Heart right ventricle (tissue), 16 donors: ENCODE measurements at regions of chr12 and their contacts with region 1.

Region 1: GRCh38 chr12:12983420-12984035 is 16.5 kb downstream of the HEBP1 start:
- DNase-seq: peak in 1 of 2 donors; percentile 23
- ATAC-seq: peak in 6 of 8 donors; percentile 57 to 73 (median 64)
- H3K4me3 ChIP-seq: no peak overlapping the region
- H3K27ac ChIP-seq: no peak overlapping the region
- H3K4me1 ChIP-seq: peaks cover 0 to 13% (median 3%) of the 10 kb centered on the region in 9 donors
- H3K27me3 ChIP-seq: no peaks in the 10 kb centered on the region
- CTCF ChIP-seq: peak; percentile 23 to 73 (median 61)

Region 2: DNA sequence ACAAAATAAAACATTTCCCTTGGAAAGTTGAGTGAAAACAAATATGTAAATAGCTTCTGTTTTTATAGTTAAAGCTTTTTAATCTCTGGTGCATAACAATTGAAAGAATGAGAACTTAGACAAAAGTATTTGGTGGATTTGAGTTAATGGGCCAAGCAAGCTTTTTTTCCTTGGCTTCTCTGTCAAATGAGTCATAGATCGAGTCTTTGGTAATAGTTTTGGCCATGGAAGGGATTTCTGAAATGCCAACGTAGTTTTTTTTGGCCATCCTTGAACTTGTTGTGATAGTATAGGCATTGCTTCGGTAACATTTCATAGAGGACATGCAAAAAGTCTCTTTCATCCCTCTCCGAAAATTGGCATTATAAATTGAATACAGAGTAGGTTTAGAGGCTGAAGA is 322.4 kb before region 1 on chr12:
- intact Hi-C with region 1: no loop called
- DNase-seq: no peak
- ATAC-seq: no peak
- H3K4me3 ChIP-seq: no peak overlapping the region
- H3K27ac ChIP-seq: no peak overlapping the region
- H3K4me1 ChIP-seq: peaks cover 0 to 2% (median 0%) of the 10 kb centered on the region in 9 donors
- H3K27me3 ChIP-seq: no peaks in the 10 kb centered on the region
- CTCF ChIP-seq: no peak

Region 3: GRCh38 chr12:12819671-12820311 is 163.7 kb before region 1 on chr12:
- intact Hi-C with region 1: loop called in 2 of 10 experiments (anchors 10 kb)
- DNase-seq: no peak
- ATAC-seq: peak in 4 of 8 donors; percentile 35 to 62 (median 53)
- H3K4me3 ChIP-seq: no peak overlapping the region
- H3K27ac ChIP-seq: peak overlapping the region in 3 of 10 donors; percentile 25 to 37 (median 32)
- H3K4me1 ChIP-seq: peaks cover 0 to 58% (median 34%) of the 10 kb centered on the region in 9 donors
- H3K27me3 ChIP-seq: no peaks in the 10 kb centered on the region
- CTCF ChIP-seq: no peak

Region 4: GRCh38 chr12:12837025-12837872 is 146.3 kb before region 1 on chr12:
- intact Hi-C with region 1: loop called in 6 of 10 experiments (anchors 2 to 10 kb)
- DNase-seq: peak in 1 of 2 donors; percentile 12
- ATAC-seq: peak; percentile 35 to 83 (median 56)
- H3K4me3 ChIP-seq: no peak overlapping the region
- H3K27ac ChIP-seq: no peak overlapping the region
- H3K4me1 ChIP-seq: peaks cover 0 to 7% (median 0%) of the 10 kb centered on the region in 9 donors
- H3K27me3 ChIP-seq: no peaks in the 10 kb centered on the region
- CTCF ChIP-seq: peak in 8 of 9 donors; percentile 29 to 63 (median 52)

Region 5: DNA sequence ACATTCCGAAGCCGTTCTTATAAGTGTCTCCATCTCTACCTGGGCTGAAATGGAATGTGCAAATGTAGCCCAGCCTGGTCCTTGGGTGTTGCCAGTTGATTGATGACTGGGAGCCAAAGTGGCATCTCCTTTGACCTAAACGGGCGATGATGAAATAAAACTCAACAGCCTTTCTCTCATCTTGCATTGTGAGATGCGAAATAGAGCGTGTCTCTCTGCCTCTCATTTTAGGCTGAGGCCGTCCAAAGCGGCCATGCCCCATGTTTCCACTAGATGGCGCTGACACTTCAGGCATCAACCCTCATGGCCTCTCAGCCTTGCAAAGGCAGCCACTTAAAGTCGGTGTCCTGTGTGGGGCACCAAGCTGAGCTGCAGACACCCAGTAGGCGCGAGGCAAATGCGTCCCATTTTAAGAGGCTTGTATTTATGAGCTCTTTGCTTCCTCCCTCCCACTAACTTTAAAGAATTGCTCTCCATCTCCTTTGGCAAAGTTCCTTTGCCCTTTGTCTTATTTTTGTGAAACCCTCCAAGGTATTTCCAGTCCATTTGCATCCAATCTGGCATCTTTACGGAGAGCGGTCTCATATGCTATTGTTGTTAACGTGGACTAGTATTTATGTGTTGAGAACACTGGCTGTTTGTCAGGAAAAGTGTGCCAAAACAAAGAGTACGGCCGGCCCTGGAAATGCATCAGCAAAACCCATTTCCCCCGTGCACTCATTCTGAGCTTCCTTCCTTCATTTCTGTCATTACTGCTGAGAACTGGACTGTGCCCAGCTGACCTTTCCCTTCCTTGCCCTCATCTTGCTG is 67.2 kb before region 1 on chr12:
- intact Hi-C with region 1: loop called (anchors 1 to 10 kb)
- DNase-seq: peak; percentile 85 to 87
- ATAC-seq: peak; percentile 87 to 97 (median 95)
- H3K4me3 ChIP-seq: peak overlapping the region in 5 of 10 donors; percentile 16 to 32 (median 19)
- H3K27ac ChIP-seq: peak overlapping the region in 8 of 10 donors; percentile 12 to 51 (median 35)
- H3K4me1 ChIP-seq: peaks cover 0 to 19% (median 8%) of the 10 kb centered on the region in 9 donors
- H3K27me3 ChIP-seq: peaks cover 0 to 3% (median 0%) of the 10 kb centered on the region in 7 donors
- CTCF ChIP-seq: peak; percentile 94 to 99 (median 98)

Region 6: DNA sequence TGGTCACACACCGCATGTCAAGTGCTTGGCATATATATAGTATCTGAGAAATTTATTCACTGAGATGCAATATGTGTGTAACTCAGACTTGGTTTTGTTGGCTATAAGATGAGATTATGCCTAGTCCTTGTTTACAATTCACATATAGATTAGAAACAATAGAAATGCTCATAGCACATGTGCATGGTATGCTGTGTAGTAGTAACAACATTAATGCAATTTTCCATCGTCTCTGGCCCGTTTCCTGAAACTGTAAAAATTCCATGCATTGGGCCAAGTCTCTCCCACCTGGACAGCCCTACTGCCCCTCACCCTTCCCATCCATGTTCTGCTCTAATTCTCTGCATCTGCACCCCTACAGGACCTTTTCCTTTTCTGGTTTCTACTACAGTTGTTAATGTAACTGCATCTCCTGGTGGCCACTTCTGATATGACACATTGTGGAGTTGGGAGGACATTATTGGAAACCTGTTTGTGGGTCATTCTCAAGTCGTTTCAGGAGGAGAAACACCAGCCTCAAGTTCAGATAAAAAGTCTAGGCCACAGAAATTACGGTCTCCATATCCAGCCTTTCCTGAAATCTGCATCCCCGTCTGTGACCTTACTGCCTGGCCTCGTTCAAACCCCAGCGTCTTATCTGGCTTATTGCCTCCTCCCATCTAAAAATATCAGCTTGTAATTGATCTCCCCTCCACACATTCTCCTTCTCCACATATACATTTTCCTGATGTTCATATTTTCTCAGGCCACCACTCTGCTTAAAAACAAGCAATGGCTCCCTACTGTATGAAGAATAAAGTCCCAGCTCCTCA is 250.5 kb after region 1 on chr12:
- intact Hi-C with region 1: loop called in 1 of 10 experiments (anchors 10 kb)
- DNase-seq: peak in 1 of 2 donors; percentile 67
- ATAC-seq: peak in 6 of 8 donors; percentile 47 to 75 (median 64)
- H3K4me3 ChIP-seq: no peak overlapping the region
- H3K27ac ChIP-seq: no peak overlapping the region
- H3K4me1 ChIP-seq: peaks cover 0 to 8% (median 0%) of the 10 kb centered on the region in 9 donors
- H3K27me3 ChIP-seq: no peaks in the 10 kb centered on the region
- CTCF ChIP-seq: peak; percentile 51 to 85 (median 72)

Region 7: DNA sequence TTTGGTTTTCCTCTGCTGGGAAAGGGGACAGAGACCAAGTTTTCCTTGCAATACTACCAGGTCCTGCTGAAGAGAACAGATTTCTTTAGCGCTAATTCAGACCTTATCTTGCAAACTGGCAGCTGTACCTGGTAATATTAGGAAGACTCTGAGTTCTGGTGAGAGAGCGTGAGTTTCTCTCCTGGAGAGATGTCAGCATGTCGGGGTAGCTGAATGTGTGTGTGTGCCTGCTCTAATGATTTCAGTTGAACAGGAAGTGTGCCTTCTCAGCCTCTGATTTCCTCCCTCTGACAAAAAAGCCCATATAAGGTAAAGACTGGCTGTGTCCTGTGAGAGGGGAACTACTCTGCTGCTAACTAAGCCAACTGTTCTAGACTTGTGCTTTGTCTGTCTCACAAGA is 1965.1 kb after region 1 on chr12:
- intact Hi-C with region 1: no loop called
- DNase-seq: peak in 1 of 2 donors; percentile 44
- ATAC-seq: peak; percentile 83 to 90 (median 86)
- H3K4me3 ChIP-seq: peak overlapping the region in 1 of 10 donors; percentile 35
- H3K27ac ChIP-seq: peak overlapping the region; percentile 30 to 95 (median 80)
- H3K4me1 ChIP-seq: peaks cover 8 to 79% (median 55%) of the 10 kb centered on the region in 9 donors
- H3K27me3 ChIP-seq: no peaks in the 10 kb centered on the region
- CTCF ChIP-seq: no peak